BJ (cell line): ENCODE measurements at regions of chr20 and their contacts with region 1.

Region 1: DNA sequence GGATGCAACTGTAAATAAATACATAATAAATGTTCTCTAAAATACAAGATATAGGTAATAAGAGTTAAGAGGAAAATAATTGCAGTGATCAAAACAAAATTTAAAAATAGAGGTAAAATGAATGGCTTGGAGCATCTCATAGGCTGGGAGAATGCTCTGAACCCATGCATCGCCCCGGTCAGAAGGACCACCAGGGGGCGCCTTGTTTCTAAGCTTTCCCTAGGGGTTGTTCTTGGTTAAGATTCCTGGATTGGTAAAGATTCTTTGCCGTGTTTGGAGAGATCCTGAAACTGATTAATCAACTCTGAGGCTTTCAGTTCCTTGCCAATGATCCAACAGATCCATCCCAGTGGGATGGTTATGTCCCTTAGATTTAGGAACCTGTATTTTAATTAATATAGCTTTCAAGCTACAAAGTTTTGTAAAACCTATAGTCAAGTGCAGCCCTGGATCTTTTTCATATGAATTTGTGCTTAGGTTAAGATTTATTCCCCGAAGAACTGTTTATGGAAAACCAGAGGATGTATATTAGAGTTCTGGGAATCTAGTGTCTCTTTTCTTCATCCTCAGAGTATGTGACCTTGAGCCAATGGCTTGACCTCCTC is 45.3 kb upstream of the PRELID3B start:
- DNase-seq: no peak
- H3K4me3 ChIP-seq: no peak overlapping the region
- H3K27me3 ChIP-seq: peaks cover 2% of the 10 kb centered on the region; the same call in 1 of the 2 replicates
- CTCF ChIP-seq: peak; percentile 88

Region 2: GRCh38 chr20:57753332-57754164 is 1334.4 kb before region 1 on chr20:
- CTCF ChIA-PET with region 1: no interaction called
- POLR2A ChIA-PET with region 1: no interaction called
- DNase-seq: no peak
- H3K4me3 ChIP-seq: no peak overlapping the region
- H3K27me3 ChIP-seq: peaks cover 15% of the 10 kb centered on the region
- CTCF ChIP-seq: no peak

Region 3: GRCh38 chr20:59102841-59103299 is 14.9 kb after region 1 on chr20:
- CTCF ChIA-PET with region 1: interaction called, 17 read pairs
- POLR2A ChIA-PET with region 1: no interaction called
- DNase-seq: no peak
- H3K4me3 ChIP-seq: no peak overlapping the region
- H3K27me3 ChIP-seq: 0 out of 2 replicates have a peak, but pooled peaks cover 2% of the 10 kb centered on the region
- CTCF ChIP-seq: no peak

Region 4: GRCh38 chr20:59455402-59456341 is 367.7 kb after region 1 on chr20:
- CTCF ChIA-PET with region 1: interaction called, 11 read pairs
- POLR2A ChIA-PET with region 1: no interaction called
- DNase-seq: no peak
- H3K4me3 ChIP-seq: no peak overlapping the region
- H3K27me3 ChIP-seq: no peaks in the 10 kb centered on the region
- CTCF ChIP-seq: peak; percentile 53